ENCODE measurements at regions of chr17 and their contacts with region 1.

Region 1: GRCh38 chr17:58517734-58518609 is 3.5 kb upstream of the MTMR4 start:
- DNase-seq: peak; percentile 99
- ATAC-seq: peak; percentile 89
- H3K4me3 ChIP-seq: peak overlapping the region; percentile 99
- H3K27ac ChIP-seq: peak overlapping the region; percentile 93
- H3K4me1 ChIP-seq: peaks cover 19% of the 10 kb centered on the region
- H3K27me3 ChIP-seq: no peaks in the 10 kb centered on the region
- CTCF ChIP-seq: no peak
- EP300 ChIP-seq: peak in 1 of 2 experiments; percentile 44; a peak in 1 of 4 replicates
- POLR2A ChIP-seq: peak; percentile 86
- RAD21 ChIP-seq: no peak

Region 2: GRCh38 chr17:58277107-58277801 is 240.7 kb before region 1 on chr17:
- CTCF ChIA-PET with region 1: no interaction called
- POLR2A ChIA-PET with region 1: no interaction called
- RAD21 ChIA-PET with region 1: no interaction called
- SMC1A ChIA-PET with region 1: no interaction called
- in situ Hi-C with region 1: no loop called
- intact Hi-C with region 1: no loop called
- DNase-seq: no peak
- ATAC-seq: peak; percentile 64
- H3K4me3 ChIP-seq: no peak overlapping the region
- H3K27ac ChIP-seq: no peak overlapping the region
- H3K4me1 ChIP-seq: no peaks in the 10 kb centered on the region; the same call in 1 of the 2 replicates
- H3K27me3 ChIP-seq: no peaks in the 10 kb centered on the region; a peak in 1 of 4 replicates
- CTCF ChIP-seq: peak; percentile 48 to 51 (median 50); a peak in 5 of 6 replicates
- EP300 ChIP-seq: no peak
- POLR2A ChIP-seq: no peak
- RAD21 ChIP-seq: peak; percentile 56

Region 3: DNA sequence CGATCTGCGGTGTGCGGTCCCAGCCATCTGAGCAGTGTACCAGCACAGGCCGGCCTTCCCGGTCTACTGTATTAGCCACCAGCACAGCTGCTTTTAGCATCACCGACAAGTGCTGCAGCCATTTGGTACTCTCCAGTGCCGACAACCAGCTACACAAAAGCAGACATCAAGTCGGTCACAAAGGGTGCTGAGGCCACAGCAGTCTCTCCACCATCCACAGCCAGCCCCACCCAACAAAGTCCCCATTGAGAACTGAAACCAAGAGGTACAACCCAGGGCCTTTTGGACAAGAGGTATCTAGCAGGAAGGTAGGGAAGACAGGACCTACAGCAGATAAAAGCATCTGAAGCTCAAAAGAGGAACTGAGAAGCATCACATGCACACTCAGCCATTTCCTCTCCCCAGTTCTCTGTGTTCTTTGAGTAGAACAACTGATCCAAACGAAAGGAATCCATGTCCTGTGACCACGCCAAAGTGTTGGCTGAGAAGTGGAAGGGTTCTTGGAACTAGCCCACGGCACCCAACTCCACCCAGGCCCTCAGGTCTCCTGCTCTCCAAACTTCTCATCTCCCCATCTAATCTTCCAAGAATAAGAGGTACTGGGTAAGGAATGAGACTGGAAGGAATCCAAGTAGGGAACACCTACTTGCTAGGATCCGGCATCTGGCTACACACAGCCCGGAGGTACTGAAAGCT is 13.0 kb before region 1 on chr17:
- CTCF ChIA-PET with region 1: interaction called, 15 read pairs
- POLR2A ChIA-PET with region 1: interaction called, 5 read pairs
- RAD21 ChIA-PET with region 1: interaction called, 4 read pairs
- SMC1A ChIA-PET with region 1: interaction called, 22 read pairs
- in situ Hi-C with region 1: no loop called
- intact Hi-C with region 1: no loop called
- DNase-seq: peak; percentile 68
- ATAC-seq: peak; percentile 98
- H3K4me3 ChIP-seq: peak overlapping the region; percentile 42; the same call in 1 of the 2 replicates
- H3K27ac ChIP-seq: peak overlapping the region; percentile 77
- H3K4me1 ChIP-seq: peaks cover 20% of the 10 kb centered on the region
- H3K27me3 ChIP-seq: no peaks in the 10 kb centered on the region
- CTCF ChIP-seq: no peak
- EP300 ChIP-seq: peak in 1 of 2 experiments; percentile 88; a peak in 2 of 4 replicates
- POLR2A ChIP-seq: no peak; the same call in 1 of the 2 replicates
- RAD21 ChIP-seq: no peak

Region 4: DNA sequence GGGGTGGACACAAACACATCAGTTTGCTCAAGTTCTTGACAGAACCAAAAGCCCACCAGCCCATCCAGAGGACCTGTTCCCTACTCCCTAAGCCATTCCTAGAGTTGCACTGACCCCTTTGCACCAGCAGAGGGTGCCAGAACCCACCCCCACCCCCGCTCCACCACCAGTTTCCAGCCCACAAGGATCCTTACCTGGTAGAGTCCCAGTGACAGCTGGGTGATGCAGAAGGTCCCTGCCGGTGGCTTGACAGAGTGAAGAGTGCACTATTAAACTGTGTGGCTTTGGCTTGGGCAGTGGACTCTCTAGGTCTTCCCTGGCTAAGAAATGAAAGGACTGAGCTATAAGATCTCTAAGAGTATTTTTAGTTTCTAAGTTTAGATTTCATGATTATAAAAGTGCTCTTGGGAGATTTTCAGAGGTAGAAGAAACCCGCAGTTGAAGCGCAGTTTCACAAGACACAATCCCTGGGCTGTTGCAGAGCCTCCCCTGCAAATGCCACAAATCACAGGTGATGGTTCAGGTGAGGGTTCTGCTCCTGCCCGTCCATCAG is 69.8 kb after region 1 on chr17:
- CTCF ChIA-PET with region 1: interaction called, 10 read pairs
- POLR2A ChIA-PET with region 1: interaction called, 4 read pairs
- RAD21 ChIA-PET with region 1: interaction called, 3 read pairs
- SMC1A ChIA-PET with region 1: interaction called, 6 read pairs
- in situ Hi-C with region 1: no loop called
- intact Hi-C with region 1: loop called (anchors 1 kb)
- DNase-seq: no peak
- ATAC-seq: peak; percentile 92
- H3K4me3 ChIP-seq: no peak overlapping the region
- H3K27ac ChIP-seq: no peak overlapping the region
- H3K4me1 ChIP-seq: no peaks in the 10 kb centered on the region
- H3K27me3 ChIP-seq: no peaks in the 10 kb centered on the region
- CTCF ChIP-seq: peak; percentile 94 to 97 (median 97)
- EP300 ChIP-seq: no peak
- POLR2A ChIP-seq: no peak
- RAD21 ChIP-seq: peak; percentile 95

Region 5: DNA sequence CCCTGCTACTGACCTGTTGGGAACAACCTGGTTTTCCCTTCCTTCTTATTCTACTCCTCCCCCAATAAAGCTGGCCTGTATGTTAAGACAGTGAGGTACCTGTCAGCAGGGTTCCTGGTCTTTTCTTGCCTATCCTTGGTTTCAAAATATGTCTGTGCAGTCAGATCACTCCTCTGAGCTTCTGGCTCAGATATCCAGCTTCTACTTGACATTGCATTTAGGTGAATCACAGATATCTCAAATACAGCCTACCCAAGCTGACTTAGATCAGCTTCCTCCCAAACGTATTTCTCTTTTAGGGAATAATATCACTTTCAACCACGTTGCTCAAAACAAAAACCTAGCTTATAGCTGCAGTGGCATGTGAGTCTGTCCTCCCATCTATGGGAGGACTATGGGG is 125.2 kb after region 1 on chr17:
- CTCF ChIA-PET with region 1: no interaction called
- POLR2A ChIA-PET with region 1: no interaction called
- RAD21 ChIA-PET with region 1: no interaction called
- SMC1A ChIA-PET with region 1: no interaction called
- in situ Hi-C with region 1: no loop called
- intact Hi-C with region 1: no loop called
- DNase-seq: no peak
- ATAC-seq: no peak
- H3K4me3 ChIP-seq: no peak overlapping the region
- H3K27ac ChIP-seq: no peak overlapping the region
- H3K4me1 ChIP-seq: no peaks in the 10 kb centered on the region
- H3K27me3 ChIP-seq: no peaks in the 10 kb centered on the region
- CTCF ChIP-seq: no peak
- EP300 ChIP-seq: no peak
- POLR2A ChIP-seq: no peak
- RAD21 ChIP-seq: no peak

Region 6: DNA sequence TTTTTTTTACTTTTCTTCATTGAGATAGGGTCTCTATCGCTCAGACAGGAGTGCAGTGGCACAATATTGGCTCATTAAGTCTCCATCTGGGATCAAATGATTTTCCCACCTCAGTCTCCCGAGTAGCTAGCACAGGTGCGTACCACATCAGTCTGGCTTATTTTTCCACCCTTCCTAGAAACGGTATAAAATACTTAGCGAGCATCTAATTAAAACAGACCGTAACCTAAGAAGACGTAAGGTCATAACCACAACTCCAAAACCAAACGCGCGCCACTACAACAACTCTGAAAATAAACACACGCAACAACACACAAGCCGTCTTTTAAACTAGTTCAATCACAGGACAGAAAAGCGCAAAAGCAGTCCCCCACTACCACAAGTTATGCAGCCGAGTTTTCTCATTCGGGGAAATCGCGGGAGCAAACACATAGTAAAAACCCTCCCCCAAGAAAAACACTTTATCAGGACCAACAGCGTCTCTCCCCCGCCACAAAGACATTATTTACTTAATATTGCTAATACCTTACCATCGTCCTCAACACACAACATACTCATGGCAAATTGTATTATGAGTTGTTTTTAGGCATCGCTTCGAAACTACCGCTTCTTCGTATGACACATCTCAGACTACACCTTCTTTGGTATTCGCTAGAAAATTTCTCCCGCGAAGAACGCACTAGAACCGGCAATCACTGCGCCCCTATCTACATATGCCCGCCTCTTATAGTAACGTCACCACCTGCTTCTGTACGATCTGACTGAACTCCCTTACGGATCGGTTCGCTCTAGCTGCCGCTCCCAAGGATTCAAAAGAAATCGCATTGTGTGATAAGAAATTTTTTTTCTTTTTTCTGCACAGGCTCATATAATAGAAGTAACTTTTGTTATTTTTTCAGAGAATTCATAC is 141.1 kb after region 1 on chr17:
- CTCF ChIA-PET with region 1: interaction called, 3 read pairs
- POLR2A ChIA-PET with region 1: interaction called, 3 read pairs
- RAD21 ChIA-PET with region 1: interaction called, 4 read pairs
- SMC1A ChIA-PET with region 1: no interaction called
- in situ Hi-C with region 1: no loop called
- intact Hi-C with region 1: loop called (anchors 1 kb)
- DNase-seq: peak; percentile 95
- ATAC-seq: peak; percentile 93
- H3K4me3 ChIP-seq: peak overlapping the region; percentile 44; the same call in 1 of the 2 replicates
- H3K27ac ChIP-seq: peak overlapping the region; percentile 77
- H3K4me1 ChIP-seq: no peaks in the 10 kb centered on the region
- H3K27me3 ChIP-seq: no peaks in the 10 kb centered on the region
- CTCF ChIP-seq: no peak
- EP300 ChIP-seq: no peak; a peak in 1 of 4 replicates
- POLR2A ChIP-seq: peak; percentile 98
- RAD21 ChIP-seq: peak; percentile 5; the same call in 1 of the 2 replicates

Measured in GM12878 (cell line).